ENCODE measurements at regions of chr2 and their contacts with region 1.

Region 1: GRCh38 chr2:35858216-35858615 is 497.4 kb upstream of the CRIM1 start:
- DNase-seq: no peak
- H3K4me3 Mint-ChIP-seq: no peak overlapping the region
- H3K27ac Mint-ChIP-seq: no peak overlapping the region
- H3K4me1 Mint-ChIP-seq: no peaks in the 10 kb centered on the region
- H3K27me3 Mint-ChIP-seq: no peaks in the 10 kb centered on the region
- CTCF ChIP-seq: no peak

Region 2: GRCh38 chr2:36329746-36330472 is 471.7 kb after region 1 on chr2:
- CTCF ChIA-PET with region 1: interaction called, 13 read pairs
- intact Hi-C with region 1: no loop called
- DNase-seq: peak; percentile 26
- H3K4me3 Mint-ChIP-seq: no peak overlapping the region
- H3K27ac Mint-ChIP-seq: peak overlapping the region; percentile 34
- H3K4me1 Mint-ChIP-seq: peaks cover 30% of the 10 kb centered on the region
- H3K27me3 Mint-ChIP-seq: no peaks in the 10 kb centered on the region
- CTCF ChIP-seq: no peak

Region 3: GRCh38 chr2:36578343-36579280 is 720.4 kb after region 1 on chr2:
- CTCF ChIA-PET with region 1: no interaction called
- intact Hi-C with region 1: no loop called
- DNase-seq: peak; percentile 8
- H3K4me3 Mint-ChIP-seq: peak overlapping the region; percentile 29
- H3K27ac Mint-ChIP-seq: peak overlapping the region; percentile 85
- H3K4me1 Mint-ChIP-seq: peaks cover 20% of the 10 kb centered on the region
- H3K27me3 Mint-ChIP-seq: no peaks in the 10 kb centered on the region
- CTCF ChIP-seq: no peak